Caco-2 (cell line): ENCODE measurements at regions of chr3 and their contacts with region 1.

Region 1: DNA sequence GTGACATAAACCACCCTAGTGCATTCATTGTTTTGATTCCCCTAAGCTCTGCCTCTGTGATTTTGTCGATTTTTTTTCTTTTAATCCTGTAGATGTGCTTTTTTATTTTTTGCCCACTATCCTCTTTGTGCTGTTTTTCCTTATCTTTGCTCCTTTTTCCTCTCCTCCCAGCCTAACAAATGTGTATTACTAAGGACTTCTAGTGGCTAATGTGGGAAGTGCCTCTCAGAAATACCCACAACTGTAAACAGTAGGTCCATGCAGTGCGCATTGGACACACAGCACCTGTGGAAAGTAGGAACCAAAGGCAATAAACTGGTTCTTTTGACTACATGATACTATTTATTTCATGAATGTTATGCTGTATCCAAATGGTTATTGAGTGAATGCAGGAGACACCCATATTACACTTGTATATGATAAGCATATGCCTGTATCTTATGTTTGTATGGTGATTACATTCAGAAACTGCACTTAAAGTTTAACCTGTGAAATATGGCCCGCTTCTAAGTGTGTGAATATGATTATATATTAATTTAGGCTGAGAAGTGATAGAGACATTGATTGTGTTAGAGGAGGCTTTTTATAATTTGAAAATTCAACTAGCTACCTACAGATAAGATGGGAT is 147.8 kb downstream of the PLCL2 start:
- DNase-seq: peak in 1 of 2 experiments; percentile 31
- H3K4me3 ChIP-seq: no peak overlapping the region
- H3K4me3 Mint-ChIP-seq: no peak overlapping the region
- H3K27ac Mint-ChIP-seq: no peak overlapping the region
- H3K4me1 ChIP-seq: no peaks in the 10 kb centered on the region
- H3K4me1 Mint-ChIP-seq: no peaks in the 10 kb centered on the region
- H3K27me3 ChIP-seq: no peaks in the 10 kb centered on the region
- H3K27me3 Mint-ChIP-seq: peaks cover 14% of the 10 kb centered on the region
- CTCF ChIP-seq: peak; percentile 46 to 77

Region 2: GRCh38 chr3:16828815-16829214 is 203.7 kb before region 1 on chr3:
- CTCF ChIA-PET with region 1: no interaction called
- POLR2A ChIA-PET with region 1: no interaction called
- intact Hi-C with region 1: loop called (anchors 10 kb)
- DNase-seq: peak in 1 of 2 experiments; percentile 11
- H3K4me3 ChIP-seq: no peak overlapping the region
- H3K4me3 Mint-ChIP-seq: no peak overlapping the region
- H3K27ac Mint-ChIP-seq: no peak overlapping the region
- H3K4me1 ChIP-seq: no peaks in the 10 kb centered on the region
- H3K4me1 Mint-ChIP-seq: no peaks in the 10 kb centered on the region
- H3K27me3 ChIP-seq: no peaks in the 10 kb centered on the region
- H3K27me3 Mint-ChIP-seq: peaks cover 18% of the 10 kb centered on the region
- CTCF ChIP-seq: peak in 1 of 2 experiments; percentile 37

Region 3: DNA sequence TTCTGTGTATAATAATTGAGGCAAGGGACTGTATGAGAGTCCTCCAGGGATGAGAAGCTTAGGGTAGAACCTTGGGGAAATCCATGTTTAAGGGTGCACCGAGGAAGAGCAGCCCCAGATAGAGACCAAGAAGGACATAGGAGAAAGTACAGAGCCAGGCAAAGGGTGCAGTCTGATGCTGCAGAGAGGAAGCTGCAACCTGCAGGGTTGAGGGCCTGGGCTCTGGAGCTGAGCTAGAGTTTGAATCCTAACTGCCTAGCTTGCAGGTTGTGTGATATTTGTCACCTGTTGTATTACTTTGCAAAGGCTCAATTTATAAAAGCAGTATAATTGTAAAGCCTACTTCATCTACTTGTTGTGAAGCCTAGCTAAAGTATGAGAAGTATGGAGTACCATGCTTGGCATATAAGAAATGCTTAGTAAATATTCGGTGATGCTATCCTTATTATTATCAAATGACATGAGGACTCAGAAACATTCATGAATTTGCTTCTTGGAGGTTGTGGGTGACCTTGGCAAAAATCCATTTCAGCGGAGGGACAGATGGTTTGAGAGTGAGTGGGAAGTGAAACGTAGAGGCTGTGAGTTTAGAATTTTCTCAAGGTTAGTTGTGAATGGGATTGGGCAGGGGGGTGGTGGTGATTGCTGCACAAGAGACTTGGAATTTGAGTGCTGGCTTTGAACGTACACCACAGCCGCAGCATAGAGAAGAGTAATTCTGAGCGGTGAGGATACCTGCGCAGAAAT is 104.0 kb before region 1 on chr3:
- CTCF ChIA-PET with region 1: no interaction called
- POLR2A ChIA-PET with region 1: no interaction called
- intact Hi-C with region 1: loop called (anchors 2 kb)
- DNase-seq: no peak
- H3K4me3 ChIP-seq: no peak overlapping the region
- H3K4me3 Mint-ChIP-seq: no peak overlapping the region
- H3K27ac Mint-ChIP-seq: no peak overlapping the region
- H3K4me1 ChIP-seq: no peaks in the 10 kb centered on the region
- H3K4me1 Mint-ChIP-seq: no peaks in the 10 kb centered on the region
- H3K27me3 ChIP-seq: no peaks in the 10 kb centered on the region; the same call in 1 of the 2 replicates
- H3K27me3 Mint-ChIP-seq: peaks cover 6% of the 10 kb centered on the region
- CTCF ChIP-seq: no peak

Region 4: DNA sequence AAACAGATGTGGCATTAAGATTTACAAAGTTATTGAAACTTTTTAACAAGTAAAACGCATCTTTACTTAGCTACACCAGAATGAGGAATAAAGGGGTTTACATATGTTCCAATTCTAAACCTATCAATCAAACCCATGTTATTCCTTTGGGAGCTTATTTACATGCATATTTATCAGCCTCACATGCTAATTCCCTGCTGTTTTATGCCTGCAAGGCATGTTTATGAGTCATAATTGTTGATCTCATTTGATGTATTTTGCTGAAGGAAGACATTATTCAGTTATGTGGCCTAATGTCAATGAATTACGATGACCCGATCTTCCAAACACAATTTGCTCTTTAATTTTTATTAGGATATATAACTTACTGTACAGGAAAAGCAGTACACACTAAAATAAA is 437.0 kb after region 1 on chr3:
- CTCF ChIA-PET with region 1: no interaction called
- POLR2A ChIA-PET with region 1: no interaction called
- intact Hi-C with region 1: no loop called
- DNase-seq: no peak
- H3K4me3 ChIP-seq: no peak overlapping the region
- H3K4me3 Mint-ChIP-seq: no peak overlapping the region
- H3K27ac Mint-ChIP-seq: no peak overlapping the region
- H3K4me1 ChIP-seq: no peaks in the 10 kb centered on the region
- H3K4me1 Mint-ChIP-seq: no peaks in the 10 kb centered on the region
- H3K27me3 ChIP-seq: no peaks in the 10 kb centered on the region
- H3K27me3 Mint-ChIP-seq: no peaks in the 10 kb centered on the region
- CTCF ChIP-seq: no peak